ENCODE measurements at regions of chr1 and their contacts with region 1.

Region 1: DNA sequence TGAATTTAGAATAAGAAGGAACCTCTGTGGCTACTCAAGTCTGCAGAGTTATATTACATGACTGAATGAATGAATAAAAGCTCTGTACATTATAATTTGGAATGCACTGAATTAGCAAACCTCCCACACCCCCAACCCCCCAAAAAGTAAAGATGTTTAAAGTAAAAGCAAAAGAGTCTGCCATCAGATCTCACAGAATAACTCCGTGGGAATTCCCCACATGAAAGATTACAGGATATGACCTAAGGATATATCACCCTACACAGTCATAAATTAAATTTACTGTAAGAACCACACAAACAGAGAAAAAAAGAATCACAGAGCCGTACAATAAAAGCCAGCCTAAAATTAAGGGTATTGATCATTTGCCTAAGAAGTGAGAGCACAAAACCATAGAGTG is 587.3 kb downstream of the PTPRC start:
- DNase-seq: peak; percentile 66
- H3K4me3 Mint-ChIP-seq: peak overlapping the region; percentile 46
- H3K27ac Mint-ChIP-seq: peak overlapping the region; percentile 27
- H3K4me1 Mint-ChIP-seq: peaks cover 23% of the 10 kb centered on the region
- H3K27me3 Mint-ChIP-seq: no peaks in the 10 kb centered on the region

Region 2: DNA sequence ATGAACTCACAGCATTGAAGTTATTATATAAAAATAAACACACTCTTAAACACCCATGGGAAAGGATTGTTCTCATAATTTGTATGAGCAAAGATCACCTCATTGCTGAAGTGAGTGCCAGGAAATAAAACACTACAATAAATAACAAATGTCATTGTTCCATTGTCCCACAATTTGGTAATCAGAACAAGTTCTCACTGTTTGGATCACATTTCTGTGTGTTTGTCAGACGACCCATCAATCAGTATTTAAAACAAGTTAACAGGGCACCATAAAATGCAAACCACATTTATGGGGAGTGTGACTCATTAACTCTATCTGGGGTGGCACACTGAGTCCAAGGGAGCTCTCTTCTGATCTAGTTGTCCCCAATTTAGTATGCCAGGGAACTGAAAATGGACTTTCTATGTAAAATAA is 462.9 kb before region 1 on chr1:
- CTCF ChIA-PET with region 1: no interaction called
- intact Hi-C with region 1: loop called (anchors 10 kb)
- DNase-seq: no peak
- H3K4me3 Mint-ChIP-seq: no peak overlapping the region
- H3K27ac Mint-ChIP-seq: no peak overlapping the region
- H3K4me1 Mint-ChIP-seq: peaks cover 38% of the 10 kb centered on the region
- H3K27me3 Mint-ChIP-seq: no peaks in the 10 kb centered on the region

Region 3: DNA sequence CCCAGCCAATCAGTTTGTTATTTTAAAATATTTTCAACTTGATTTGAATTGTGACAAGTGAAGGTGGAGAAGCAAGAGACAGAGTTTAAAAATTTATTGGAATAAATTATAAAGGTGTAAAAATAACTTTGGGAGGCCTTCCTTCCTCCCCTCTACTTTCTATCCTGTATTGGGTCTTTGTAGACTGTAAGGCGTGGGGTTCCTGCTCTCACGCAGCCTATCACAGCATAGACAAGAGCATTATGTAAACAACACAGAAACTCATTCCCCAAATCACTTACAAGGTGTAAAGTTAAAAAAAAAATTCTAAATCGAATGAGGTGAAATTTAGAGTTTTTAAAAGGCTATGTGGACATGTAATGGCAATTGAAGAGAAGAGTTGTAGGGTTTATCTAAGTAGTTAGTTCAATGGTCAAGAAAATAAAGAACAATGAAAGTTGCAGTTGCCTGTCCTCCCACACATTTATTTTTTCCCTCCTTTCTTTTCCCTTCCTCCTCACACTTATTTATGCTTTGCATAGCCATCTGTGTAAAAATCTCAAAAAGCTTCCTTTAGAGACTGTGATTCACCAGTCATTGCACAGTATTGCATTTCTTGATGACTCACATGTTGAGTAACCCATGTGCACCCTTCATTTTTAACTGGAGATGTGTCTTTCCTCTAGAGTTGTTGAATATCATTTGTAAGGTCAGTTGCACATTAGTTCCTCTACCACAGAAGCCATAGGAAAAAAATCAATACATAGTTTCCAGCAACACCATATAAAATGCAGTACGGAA is 345.2 kb before region 1 on chr1:
- CTCF ChIA-PET with region 1: no interaction called
- intact Hi-C with region 1: loop called (anchors 1 kb)
- DNase-seq: peak; percentile 40
- H3K4me3 Mint-ChIP-seq: no peak overlapping the region
- H3K27ac Mint-ChIP-seq: peak overlapping the region; percentile 32
- H3K4me1 Mint-ChIP-seq: peaks cover 33% of the 10 kb centered on the region
- H3K27me3 Mint-ChIP-seq: no peaks in the 10 kb centered on the region

Region 4: GRCh38 chr1:199041173-199041914 is 184.8 kb before region 1 on chr1:
- CTCF ChIA-PET with region 1: no interaction called
- intact Hi-C with region 1: loop called (anchors 5 kb)
- DNase-seq: peak; percentile 34
- H3K4me3 Mint-ChIP-seq: peak overlapping the region; percentile 10
- H3K27ac Mint-ChIP-seq: peak overlapping the region; percentile 38
- H3K4me1 Mint-ChIP-seq: peaks cover 20% of the 10 kb centered on the region
- H3K27me3 Mint-ChIP-seq: no peaks in the 10 kb centered on the region

Region 5: GRCh38 chr1:199067483-199067882 is 158.7 kb before region 1 on chr1:
- CTCF ChIA-PET with region 1: no interaction called
- intact Hi-C with region 1: no loop called
- DNase-seq: no peak
- H3K4me3 Mint-ChIP-seq: no peak overlapping the region
- H3K27ac Mint-ChIP-seq: no peak overlapping the region
- H3K4me1 Mint-ChIP-seq: peaks cover 3% of the 10 kb centered on the region
- H3K27me3 Mint-ChIP-seq: no peaks in the 10 kb centered on the region

Region 6: DNA sequence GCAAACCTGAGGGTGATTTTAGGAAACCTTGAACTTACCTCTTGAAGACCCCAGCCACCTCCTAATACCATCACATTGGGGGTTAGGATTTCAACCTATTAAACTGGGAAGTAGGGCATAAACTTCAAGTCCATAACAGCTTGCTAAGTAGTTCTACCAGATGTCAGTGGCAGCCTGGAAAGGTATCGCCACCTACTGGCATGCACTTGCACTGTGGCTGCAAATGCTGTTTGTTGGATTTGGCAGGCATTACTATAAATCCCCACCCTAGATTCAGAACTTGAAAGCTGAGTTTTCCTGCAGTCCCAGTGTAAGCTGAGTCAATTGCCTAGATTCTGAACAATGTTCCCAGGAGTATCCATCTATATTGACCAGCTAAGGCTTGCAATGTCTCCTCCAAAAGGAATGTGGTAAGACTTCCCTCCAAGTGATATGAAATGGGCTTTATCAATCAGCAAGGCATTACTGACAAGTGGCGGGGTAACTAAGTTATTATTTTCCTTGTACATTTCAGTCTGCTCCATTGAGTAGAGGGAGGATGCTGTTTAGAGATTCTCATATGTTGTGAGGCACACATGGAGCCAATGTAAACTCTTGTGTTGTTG is 112.8 kb before region 1 on chr1:
- CTCF ChIA-PET with region 1: no interaction called
- intact Hi-C with region 1: no loop called
- DNase-seq: peak; percentile 87
- H3K4me3 Mint-ChIP-seq: no peak overlapping the region
- H3K27ac Mint-ChIP-seq: no peak overlapping the region
- H3K4me1 Mint-ChIP-seq: no peaks in the 10 kb centered on the region
- H3K27me3 Mint-ChIP-seq: no peaks in the 10 kb centered on the region

Region 7: DNA sequence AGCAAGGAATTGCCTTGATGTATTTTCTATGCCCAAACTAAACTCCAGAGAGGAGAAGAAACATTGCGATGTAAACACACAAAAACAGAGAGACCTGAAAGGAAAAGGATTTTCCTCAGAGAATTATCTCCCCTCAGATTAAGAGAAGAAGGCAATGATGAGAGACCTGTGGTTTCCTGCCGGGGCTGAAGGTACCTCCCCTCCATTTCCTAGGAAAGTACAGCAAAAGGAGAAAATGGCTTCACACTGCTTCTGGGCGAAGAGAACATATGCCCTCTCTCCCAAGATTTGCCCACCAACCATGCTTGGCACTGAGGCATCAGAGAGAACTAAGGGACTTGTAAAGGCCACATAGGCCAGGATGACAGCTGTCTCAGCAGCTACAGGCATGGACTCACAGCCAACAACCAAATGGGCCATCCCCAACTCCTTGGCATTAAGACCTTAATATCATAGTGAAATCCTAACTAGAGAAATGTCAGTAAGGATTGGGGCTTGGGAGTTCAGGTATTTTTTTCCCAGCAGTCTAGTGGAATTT is 64.3 kb before region 1 on chr1:
- CTCF ChIA-PET with region 1: no interaction called
- intact Hi-C with region 1: loop called (anchors 1 kb)
- DNase-seq: peak; percentile 11
- H3K4me3 Mint-ChIP-seq: no peak overlapping the region
- H3K27ac Mint-ChIP-seq: peak overlapping the region; percentile 29
- H3K4me1 Mint-ChIP-seq: peaks cover 21% of the 10 kb centered on the region
- H3K27me3 Mint-ChIP-seq: no peaks in the 10 kb centered on the region

Region 8: GRCh38 chr1:199308331-199308846 is 82.2 kb after region 1 on chr1:
- CTCF ChIA-PET with region 1: no interaction called
- intact Hi-C with region 1: loop called (anchors 1 kb)
- DNase-seq: no peak
- H3K4me3 Mint-ChIP-seq: no peak overlapping the region
- H3K27ac Mint-ChIP-seq: peak overlapping the region; percentile 51
- H3K4me1 Mint-ChIP-seq: peaks cover 31% of the 10 kb centered on the region
- H3K27me3 Mint-ChIP-seq: peaks cover 25% of the 10 kb centered on the region

Measured in activated naive CD4-positive, alpha-beta T cell treated with anti-CD3 and anti-CD28 coated beads for 36 hours (primary cell).